ENCODE measurements at regions of chr11 and their contacts with region 1.

Region 1: GRCh38 chr11:66987158-66987620 is 12.1 kb downstream of the C11orf86 start:
- DNase-seq: no peak
- H3K4me3 Mint-ChIP-seq: no peak overlapping the region
- H3K27ac Mint-ChIP-seq: no peak overlapping the region
- H3K4me1 Mint-ChIP-seq: peaks cover 34% of the 10 kb centered on the region
- H3K27me3 Mint-ChIP-seq: peaks cover 15% of the 10 kb centered on the region
- CTCF ChIP-seq: no peak

Region 2: DNA sequence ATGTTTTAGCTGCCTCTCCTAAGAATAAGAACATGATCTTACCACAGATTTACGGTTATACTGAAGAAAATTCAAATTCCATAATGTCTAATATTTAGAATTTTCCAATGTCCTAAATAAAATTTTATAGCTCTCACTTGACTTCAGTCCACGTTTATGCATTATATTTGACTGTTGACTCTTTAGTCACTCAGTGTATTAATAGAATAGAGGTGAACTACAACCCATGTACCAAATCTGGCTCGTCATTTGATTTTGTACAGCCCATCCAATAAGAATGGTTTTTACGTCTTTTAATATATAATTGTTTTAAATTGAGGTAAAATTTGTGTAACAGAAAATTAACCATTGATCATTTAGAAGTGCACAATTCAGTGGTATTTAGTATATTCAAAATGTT is 166.8 kb after region 1 on chr11:
- CTCF ChIA-PET with region 1: interaction called, 10 read pairs
- intact Hi-C with region 1: no loop called
- DNase-seq: no peak
- H3K4me3 Mint-ChIP-seq: no peak overlapping the region
- H3K27ac Mint-ChIP-seq: no peak overlapping the region
- H3K4me1 Mint-ChIP-seq: no peaks in the 10 kb centered on the region
- H3K27me3 Mint-ChIP-seq: no peaks in the 10 kb centered on the region
- CTCF ChIP-seq: no peak